Left cardiac atrium (tissue), 4 donors: ENCODE measurements at regions of chr14 and their contacts with region 1.

Region 1: DNA sequence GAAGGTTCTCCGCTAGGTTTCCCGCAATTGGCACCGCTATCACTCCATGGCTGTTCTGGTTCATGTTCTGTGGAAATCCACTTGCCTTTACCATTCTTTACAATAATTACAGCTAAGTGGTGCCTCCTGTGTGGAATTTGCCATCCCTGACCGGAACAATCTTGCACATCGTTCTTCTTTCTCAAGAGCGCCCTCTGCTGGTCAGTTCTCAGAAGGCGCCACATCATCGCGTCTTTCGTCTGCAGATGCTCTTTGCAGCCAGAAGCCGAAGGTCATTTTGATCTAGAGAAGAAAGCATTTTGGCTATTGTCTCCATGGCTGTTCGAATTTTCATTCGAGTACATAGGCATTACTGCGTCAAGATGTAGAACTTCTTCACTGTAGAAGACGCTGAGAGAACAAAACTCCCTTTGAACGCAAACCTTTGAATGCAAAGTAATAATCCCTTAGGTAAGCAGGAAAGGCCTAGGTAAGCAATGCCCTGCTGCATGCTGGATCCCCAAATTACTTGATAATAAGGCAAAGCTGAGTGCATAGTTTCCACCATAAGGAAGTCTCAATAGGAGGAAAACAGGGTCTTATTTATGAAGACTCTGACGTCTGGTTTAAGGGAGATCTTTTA is 10.1 kb upstream of the RTRAF start:
- DNase-seq: peak; percentile 82
- ATAC-seq: peak; percentile 79 to 81

Region 2: GRCh38 chr14:51860164-51860824 is 118.9 kb before region 1 on chr14 and contains the start of gene GNG2:
- intact Hi-C with region 1: loop called in 1 of 2 experiments (anchors 10 kb)
- DNase-seq: peak; percentile 83
- ATAC-seq: peak; percentile 97 to 100
- total RNA-seq, gene GNG2: 15.0 to 25.6 TPM

Region 3: DNA sequence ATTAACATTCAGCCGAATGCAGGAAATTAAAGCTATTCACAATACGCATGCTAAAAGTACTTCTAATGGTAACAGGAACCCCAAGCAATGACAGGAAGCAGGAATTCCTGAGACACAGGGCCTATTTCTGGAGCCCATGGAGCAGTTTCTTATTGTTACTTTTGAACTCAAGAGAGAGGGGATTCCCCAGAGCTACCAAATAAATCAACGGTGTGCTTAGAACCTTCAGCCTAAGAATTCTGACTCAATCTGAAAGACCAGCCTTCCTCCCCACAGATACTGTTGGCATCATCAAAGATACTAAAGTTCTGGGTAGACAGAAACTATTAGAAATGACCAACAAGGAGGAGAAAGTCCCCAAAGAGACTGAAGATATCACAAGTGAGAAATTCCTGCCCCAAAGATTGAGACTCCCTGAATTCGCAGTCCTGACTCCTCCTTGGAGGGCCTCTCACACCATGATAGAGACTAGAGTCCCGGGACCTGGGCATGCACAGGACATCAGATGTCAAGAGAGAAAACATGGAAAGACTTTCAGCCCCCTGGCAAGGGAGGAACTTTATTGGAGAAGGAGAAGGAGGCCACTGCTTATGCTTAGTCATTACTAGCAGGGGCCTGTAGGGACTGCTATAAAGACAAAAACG is 42.9 kb after region 1 on chr14:
- intact Hi-C with region 1: no loop called
- DNase-seq: no peak
- ATAC-seq: no peak